Heart right ventricle (tissue), 16 donors: ENCODE measurements at regions of chr14 and their contacts with region 1.

Region 1: DNA sequence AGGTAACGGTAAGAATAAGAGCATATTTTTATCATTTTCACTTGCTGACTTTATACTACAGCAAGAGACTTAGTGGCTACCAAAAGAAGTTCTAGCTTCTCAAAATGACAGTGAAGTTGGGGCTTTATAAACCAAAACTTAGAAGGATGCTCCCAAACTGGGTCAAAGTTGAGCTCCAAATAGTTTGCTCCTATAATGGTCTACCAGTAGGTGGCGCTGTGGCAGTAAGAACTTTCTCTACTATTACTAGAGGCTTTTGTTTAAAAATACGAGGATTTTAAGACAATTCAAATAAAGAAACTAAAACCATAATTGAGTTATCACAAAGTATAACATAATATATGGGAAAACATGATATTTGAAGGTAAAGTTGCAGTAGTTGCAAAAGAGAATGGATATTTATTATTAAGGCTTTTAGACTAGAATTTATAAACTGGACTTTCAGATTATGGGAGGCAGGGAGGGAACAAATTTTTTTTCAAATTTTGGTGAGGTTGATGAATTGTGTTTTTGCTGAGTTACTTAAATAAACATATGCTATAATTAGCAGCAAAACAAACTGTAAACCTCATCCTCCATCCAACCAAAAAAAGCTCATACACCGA is 75.0 kb downstream of the TGFB3 start:
- DNase-seq: peak; percentile 25 to 79
- ATAC-seq: peak in 7 of 8 donors; percentile 59 to 82 (median 73)
- H3K4me3 ChIP-seq: no peak overlapping the region
- H3K27ac ChIP-seq: no peak overlapping the region
- H3K4me1 ChIP-seq: peaks cover 0 to 27% (median 13%) of the 10 kb centered on the region in 9 donors
- H3K27me3 ChIP-seq: no peaks in the 10 kb centered on the region
- CTCF ChIP-seq: peak; percentile 81 to 97 (median 91)

Region 2: DNA sequence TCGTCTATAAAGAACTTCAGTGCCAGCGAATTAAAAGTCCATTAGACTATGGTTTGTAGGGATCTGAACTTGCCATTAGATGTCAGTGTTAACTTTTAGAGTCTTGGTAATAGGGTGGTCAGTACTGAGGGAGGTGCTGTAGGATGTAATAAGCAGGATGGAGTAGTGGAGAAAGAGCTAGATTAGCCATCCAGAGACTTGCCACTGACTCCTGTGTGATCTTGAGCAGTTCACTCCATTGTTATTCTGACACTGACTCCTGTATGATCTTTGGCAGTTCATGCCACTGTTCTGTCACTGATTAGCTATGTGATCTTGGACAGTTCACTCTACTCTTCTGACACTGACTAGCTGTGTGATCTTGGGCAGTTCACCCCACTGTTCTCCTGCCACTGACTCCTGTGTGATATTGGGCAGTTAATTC is 112.2 kb before region 1 on chr14:
- intact Hi-C with region 1: loop called in 1 of 10 experiments (anchors 10 kb)
- DNase-seq: no peak
- ATAC-seq: peak; percentile 93 to 99 (median 97)
- H3K4me3 ChIP-seq: no peak overlapping the region
- H3K27ac ChIP-seq: peak overlapping the region in 3 of 10 donors; percentile 19 to 46 (median 37)
- H3K4me1 ChIP-seq: peaks cover 0 to 12% (median 0%) of the 10 kb centered on the region in 9 donors
- H3K27me3 ChIP-seq: no peaks in the 10 kb centered on the region
- CTCF ChIP-seq: peak; percentile 22 to 76 (median 52)

Region 3: DNA sequence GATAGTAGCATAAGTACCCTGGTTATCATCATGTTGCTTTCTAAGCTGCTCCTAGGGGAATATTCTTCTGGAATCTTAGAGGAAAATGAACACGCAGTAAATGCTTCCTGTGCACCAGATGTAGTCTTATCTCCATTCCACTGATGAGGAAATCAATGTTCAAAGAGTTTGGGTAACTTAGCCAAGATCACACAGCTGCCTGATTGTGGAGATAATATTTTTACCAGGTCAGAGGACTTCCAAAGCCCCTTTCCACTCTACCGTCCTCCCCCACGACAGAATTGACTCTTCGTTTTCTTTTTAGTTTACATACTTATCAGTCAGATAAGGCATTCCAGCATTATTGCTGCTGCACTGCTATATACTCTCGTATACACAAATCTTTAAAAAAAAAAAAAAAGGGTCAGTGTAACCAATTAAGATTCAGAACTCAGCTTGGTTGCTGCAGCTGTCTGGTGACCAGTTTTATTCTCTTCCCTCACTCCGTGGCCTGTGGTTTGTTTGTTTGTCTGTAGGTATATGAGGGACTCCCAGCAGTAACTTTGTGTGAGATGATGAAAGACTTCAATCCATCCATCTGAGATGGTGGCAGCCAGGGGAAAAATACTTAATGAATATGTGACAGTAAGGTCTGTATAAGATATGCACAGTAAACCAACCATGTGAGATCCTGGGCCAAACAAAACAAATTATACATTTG is 35.4 kb before region 1 on chr14:
- intact Hi-C with region 1: no loop called
- DNase-seq: no peak
- ATAC-seq: peak in 3 of 8 donors; percentile 27 to 43 (median 35)
- H3K4me3 ChIP-seq: no peak overlapping the region
- H3K27ac ChIP-seq: peak overlapping the region in 4 of 10 donors; percentile 2 to 41 (median 14)
- H3K4me1 ChIP-seq: peaks cover 3 to 50% (median 43%) of the 10 kb centered on the region in 9 donors
- H3K27me3 ChIP-seq: no peaks in the 10 kb centered on the region
- CTCF ChIP-seq: no peak

Region 4: DNA sequence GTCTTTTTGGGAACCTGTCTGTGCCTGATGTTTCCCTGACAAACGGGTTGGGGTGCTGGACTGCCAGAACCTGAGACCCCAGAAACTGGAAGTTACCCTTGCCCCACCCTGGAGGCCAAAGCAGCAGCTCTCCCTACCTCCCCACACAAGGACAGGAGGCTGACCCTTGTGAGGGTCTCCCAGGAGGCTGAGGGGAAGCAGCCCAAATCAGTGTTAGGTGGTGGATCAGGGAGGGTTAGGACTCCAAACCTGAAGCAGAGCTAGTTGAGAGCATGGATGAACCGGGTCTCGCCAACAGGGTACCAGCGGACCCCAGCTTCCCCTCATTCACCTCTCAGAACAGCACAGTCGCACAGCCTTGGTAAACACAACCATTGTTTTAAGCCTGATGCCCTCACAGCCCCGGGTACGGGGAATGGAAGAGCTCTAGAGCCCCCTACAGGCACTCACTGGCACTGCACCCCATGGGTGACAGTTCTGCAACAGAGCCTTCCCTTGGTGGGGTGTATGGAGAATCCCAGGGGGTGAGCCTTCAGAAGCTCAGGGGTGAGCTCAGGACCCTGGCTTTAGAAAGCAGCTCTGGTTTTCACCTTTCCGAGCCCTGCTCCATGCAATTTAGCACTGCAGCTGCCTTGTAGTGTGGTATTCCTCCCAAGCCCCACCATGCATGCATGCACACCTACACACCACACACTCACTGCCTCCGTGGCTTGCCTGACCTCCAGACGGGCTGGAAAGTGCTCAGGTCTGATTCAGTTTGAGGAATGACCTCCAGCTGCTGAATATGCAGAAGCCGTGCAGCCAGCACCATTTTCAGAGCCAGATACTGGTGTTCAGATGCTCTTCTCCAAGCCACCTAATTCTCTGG is 480.4 kb after region 1 on chr14:
- intact Hi-C with region 1: loop called in 1 of 10 experiments (anchors 10 kb)
- DNase-seq: peak; percentile 63 to 64
- ATAC-seq: peak; percentile 51 to 90 (median 86)
- H3K4me3 ChIP-seq: no peak overlapping the region
- H3K27ac ChIP-seq: no peak overlapping the region
- H3K4me1 ChIP-seq: peaks cover 0 to 7% (median 0%) of the 10 kb centered on the region in 9 donors
- H3K27me3 ChIP-seq: peaks cover 0 to 47% (median 19%) of the 10 kb centered on the region in 7 donors
- CTCF ChIP-seq: peak; percentile 89 to 98 (median 96)